B cell (primary cell): ENCODE measurements at regions of chr6 and their contacts with region 1.

Region 1: GRCh38 chr6:41072676-41073623 is at the start of gene NFYA:
- DNase-seq: peak; percentile 100
- ATAC-seq: peak; percentile 64
- H3K4me3 ChIP-seq: peak within 1 kb of the TSS; percentile 80 to 97 (median 94)
- H3K4me3 Mint-ChIP-seq: peak within 1 kb of the TSS; percentile 94
- H3K27ac ChIP-seq: peak within 1 kb of the TSS; percentile 96 to 97
- H3K27ac Mint-ChIP-seq: peak within 1 kb of the TSS; percentile 99
- H3K4me1 ChIP-seq: peaks cover 31 to 34% of the 10 kb centered on the region in 2 donors
- H3K4me1 Mint-ChIP-seq: peaks cover 45% of the 10 kb centered on the region
- H3K27me3 ChIP-seq: no peaks in the 10 kb centered on the region
- H3K27me3 Mint-ChIP-seq: no peaks in the 10 kb centered on the region
- CTCF ChIP-seq: peak; percentile 67
- total RNA-seq, gene NFYA: 41.6 and 44.3 TPM in 2 replicates

Region 2: GRCh38 chr6:41008011-41008410 is 64.9 kb before region 1 on chr6:
- CTCF ChIA-PET with region 1: interaction called, 12 read pairs
- POLR2A ChIA-PET with region 1: no interaction called
- intact Hi-C with region 1: loop called (anchors 1 kb)
- DNase-seq: no peak
- ATAC-seq: no peak
- H3K4me3 ChIP-seq: no peak overlapping the region
- H3K4me3 Mint-ChIP-seq: no peak overlapping the region
- H3K27ac ChIP-seq: no peak overlapping the region
- H3K27ac Mint-ChIP-seq: no peak overlapping the region
- H3K4me1 ChIP-seq: no peaks in the 10 kb centered on the region
- H3K4me1 Mint-ChIP-seq: no peaks in the 10 kb centered on the region
- H3K27me3 ChIP-seq: peaks cover 0 to 15% (median 8%) of the 10 kb centered on the region in 4 experiments
- H3K27me3 Mint-ChIP-seq: peaks cover 22% of the 10 kb centered on the region
- CTCF ChIP-seq: no peak

Region 3: GRCh38 chr6:41200296-41200900 is 127.4 kb after region 1 on chr6:
- CTCF ChIA-PET with region 1: interaction called, 3 read pairs
- POLR2A ChIA-PET with region 1: interaction called, 5 read pairs
- intact Hi-C with region 1: loop called (anchors 1 kb)
- DNase-seq: peak; percentile 71
- ATAC-seq: peak; percentile 35
- H3K4me3 ChIP-seq: peak overlapping the region; percentile 46 to 62 (median 60)
- H3K4me3 Mint-ChIP-seq: peak overlapping the region; percentile 73
- H3K27ac ChIP-seq: peak overlapping the region; percentile 90 to 94
- H3K27ac Mint-ChIP-seq: peak overlapping the region; percentile 97
- H3K4me1 ChIP-seq: peaks cover 75 to 79% of the 10 kb centered on the region in 2 donors
- H3K4me1 Mint-ChIP-seq: peaks cover 81% of the 10 kb centered on the region
- H3K27me3 ChIP-seq: no peaks in the 10 kb centered on the region
- H3K27me3 Mint-ChIP-seq: no peaks in the 10 kb centered on the region
- CTCF ChIP-seq: no peak

Region 4: GRCh38 chr6:41318654-41319565 is 246.0 kb after region 1 on chr6:
- CTCF ChIA-PET with region 1: interaction called, 4 read pairs
- POLR2A ChIA-PET with region 1: no interaction called
- intact Hi-C with region 1: loop called (anchors 1 kb)
- DNase-seq: peak; percentile 92
- ATAC-seq: peak; percentile 99
- H3K4me3 ChIP-seq: peak overlapping the region; percentile 16 to 54 (median 46)
- H3K4me3 Mint-ChIP-seq: peak overlapping the region; percentile 88
- H3K27ac ChIP-seq: peak overlapping the region; percentile 39 to 55
- H3K27ac Mint-ChIP-seq: peak overlapping the region; percentile 91
- H3K4me1 ChIP-seq: peaks cover 47 to 48% of the 10 kb centered on the region in 2 donors
- H3K4me1 Mint-ChIP-seq: peaks cover 34% of the 10 kb centered on the region
- H3K27me3 ChIP-seq: no peaks in the 10 kb centered on the region
- H3K27me3 Mint-ChIP-seq: no peaks in the 10 kb centered on the region
- CTCF ChIP-seq: peak; percentile 100

Region 5: GRCh38 chr6:41895300-41896233 is 822.6 kb after region 1 on chr6 and contains the start of gene USP49:
- CTCF ChIA-PET with region 1: no interaction called
- POLR2A ChIA-PET with region 1: no interaction called
- intact Hi-C with region 1: loop called (anchors 10 kb)
- DNase-seq: peak; percentile 93
- ATAC-seq: peak; percentile 92
- H3K4me3 ChIP-seq: peak within 1 kb of the TSS; percentile 65 to 96 (median 85)
- H3K4me3 Mint-ChIP-seq: no peak within 1 kb of the TSS
- H3K27ac ChIP-seq: peak within 1 kb of the TSS; percentile 71 to 92
- H3K27ac Mint-ChIP-seq: peak within 1 kb of the TSS; percentile 89
- H3K4me1 ChIP-seq: peaks cover 15 to 17% of the 10 kb centered on the region in 2 donors
- H3K4me1 Mint-ChIP-seq: peaks cover 10% of the 10 kb centered on the region
- H3K27me3 ChIP-seq: no peaks in the 10 kb centered on the region
- H3K27me3 Mint-ChIP-seq: no peaks in the 10 kb centered on the region
- CTCF ChIP-seq: no peak
- total RNA-seq, gene USP49: 7.5 and 9.9 TPM in 2 replicates

Region 6: GRCh38 chr6:42217519-42218367 is 1144.8 kb after region 1 on chr6 and contains the start of gene MRPS10:
- CTCF ChIA-PET with region 1: no interaction called
- POLR2A ChIA-PET with region 1: no interaction called
- intact Hi-C with region 1: loop called (anchors 5 kb)
- DNase-seq: peak; percentile 92
- ATAC-seq: peak; percentile 99
- H3K4me3 ChIP-seq: peak within 1 kb of the TSS; percentile 76 to 98 (median 86)
- H3K4me3 Mint-ChIP-seq: peak within 1 kb of the TSS; percentile 99
- H3K27ac ChIP-seq: peak within 1 kb of the TSS; percentile 58 to 76
- H3K27ac Mint-ChIP-seq: peak within 1 kb of the TSS; percentile 98
- H3K4me1 ChIP-seq: peaks cover 7 to 14% of the 10 kb centered on the region in 2 donors
- H3K4me1 Mint-ChIP-seq: peaks cover 23% of the 10 kb centered on the region
- H3K27me3 ChIP-seq: no peaks in the 10 kb centered on the region
- H3K27me3 Mint-ChIP-seq: peaks cover 4% of the 10 kb centered on the region
- CTCF ChIP-seq: no peak
- total RNA-seq, gene MRPS10: 26.4 and 28.6 TPM in 2 replicates